GM12878 (cell line): ENCODE measurements at regions of chr15 and their contacts with region 1.

Region 1: GRCh38 chr15:77179541-77179998 is 108.7 kb upstream of the TSPAN3 start:
- DNase-seq: peak; percentile 74
- ATAC-seq: peak; percentile 74
- H3K4me3 ChIP-seq: no peak overlapping the region; the same call in 1 of the 2 replicates
- H3K27ac ChIP-seq: peak overlapping the region; percentile 90
- H3K4me1 ChIP-seq: peaks cover 47% of the 10 kb centered on the region
- H3K27me3 ChIP-seq: no peaks in the 10 kb centered on the region
- CTCF ChIP-seq: peak in 2 of 3 experiments; percentile 17 to 41; a peak in 2 of 6 replicates
- EP300 ChIP-seq: peak in 1 of 2 experiments; percentile 73; a peak in 1 of 4 replicates
- POLR2A ChIP-seq: no peak
- RAD21 ChIP-seq: peak; percentile 56

Region 2: DNA sequence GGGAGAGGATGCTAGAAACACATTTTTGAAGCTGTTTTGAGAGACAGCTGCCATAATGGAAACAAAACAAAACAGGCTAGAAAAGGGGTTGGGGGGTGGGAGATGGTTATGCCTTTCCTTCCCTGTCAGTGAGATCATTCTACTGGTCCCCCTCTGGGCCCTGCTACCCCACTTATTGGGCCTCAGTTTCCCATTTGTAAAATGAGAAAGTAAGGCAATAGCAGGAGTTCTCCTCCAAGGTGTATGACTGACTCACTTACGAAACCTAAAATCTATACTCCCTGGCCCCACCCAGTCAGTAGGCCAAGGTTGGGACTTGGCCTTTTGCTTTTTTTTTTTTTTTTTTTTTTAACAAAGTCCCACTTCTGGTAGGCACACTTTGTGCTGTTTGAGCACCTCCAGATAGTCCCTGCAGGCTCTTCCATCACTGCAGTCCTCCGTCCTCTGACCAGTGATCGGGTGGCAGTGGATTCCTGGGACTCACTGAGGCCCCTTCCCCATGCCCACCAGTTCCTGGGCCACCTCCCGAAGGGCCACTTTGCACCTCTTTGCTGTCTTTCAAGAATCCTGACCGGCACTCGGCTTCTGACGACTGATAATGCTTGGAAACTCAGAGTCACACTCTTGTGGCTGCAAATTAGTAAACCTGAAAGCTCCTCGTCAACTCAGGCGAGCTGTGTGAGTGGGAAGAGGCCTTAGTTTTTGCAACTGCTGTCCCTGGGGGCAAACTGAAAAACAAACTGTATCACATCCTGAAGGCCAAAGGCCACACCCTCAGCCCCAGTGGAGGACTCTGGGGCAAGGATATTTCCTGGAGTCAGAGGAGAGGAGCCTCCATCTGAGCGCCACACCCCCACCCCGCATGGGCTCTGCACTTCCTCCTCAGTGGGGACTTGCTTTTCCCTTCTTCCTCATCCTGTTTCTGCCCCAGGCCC is 191.4 kb before region 1 on chr15:
- CTCF ChIA-PET with region 1: interaction called, 4 read pairs
- POLR2A ChIA-PET with region 1: no interaction called
- RAD21 ChIA-PET with region 1: interaction called, 12 read pairs
- SMC1A ChIA-PET with region 1: interaction called, 3 read pairs
- in situ Hi-C with region 1: no loop called
- intact Hi-C with region 1: loop called (anchors 10 kb)
- DNase-seq: peak; percentile 90
- ATAC-seq: peak; percentile 91
- H3K4me3 ChIP-seq: peak overlapping the region; percentile 40; the same call in 1 of the 2 replicates
- H3K27ac ChIP-seq: peak overlapping the region; percentile 89
- H3K4me1 ChIP-seq: peaks cover 41% of the 10 kb centered on the region
- H3K27me3 ChIP-seq: no peaks in the 10 kb centered on the region
- CTCF ChIP-seq: no peak
- EP300 ChIP-seq: peak; percentile 79 to 94; a peak in 3 of 4 replicates
- POLR2A ChIP-seq: peak; percentile 53
- RAD21 ChIP-seq: peak; percentile 25; the same call in 1 of the 2 replicates

Region 3: GRCh38 chr15:77107531-77108355 is 71.8 kb before region 1 on chr15:
- CTCF ChIA-PET with region 1: interaction called, 28 read pairs
- POLR2A ChIA-PET with region 1: no interaction called
- RAD21 ChIA-PET with region 1: interaction called, 7 read pairs
- SMC1A ChIA-PET with region 1: interaction called, 12 read pairs
- in situ Hi-C with region 1: no loop called
- intact Hi-C with region 1: no loop called
- DNase-seq: no peak
- ATAC-seq: peak; percentile 82
- H3K4me3 ChIP-seq: no peak overlapping the region
- H3K27ac ChIP-seq: no peak overlapping the region
- H3K4me1 ChIP-seq: no peaks in the 10 kb centered on the region
- H3K27me3 ChIP-seq: no peaks in the 10 kb centered on the region
- CTCF ChIP-seq: peak; percentile 61 to 76 (median 69)
- EP300 ChIP-seq: no peak
- POLR2A ChIP-seq: no peak
- RAD21 ChIP-seq: peak; percentile 78

Region 4: DNA sequence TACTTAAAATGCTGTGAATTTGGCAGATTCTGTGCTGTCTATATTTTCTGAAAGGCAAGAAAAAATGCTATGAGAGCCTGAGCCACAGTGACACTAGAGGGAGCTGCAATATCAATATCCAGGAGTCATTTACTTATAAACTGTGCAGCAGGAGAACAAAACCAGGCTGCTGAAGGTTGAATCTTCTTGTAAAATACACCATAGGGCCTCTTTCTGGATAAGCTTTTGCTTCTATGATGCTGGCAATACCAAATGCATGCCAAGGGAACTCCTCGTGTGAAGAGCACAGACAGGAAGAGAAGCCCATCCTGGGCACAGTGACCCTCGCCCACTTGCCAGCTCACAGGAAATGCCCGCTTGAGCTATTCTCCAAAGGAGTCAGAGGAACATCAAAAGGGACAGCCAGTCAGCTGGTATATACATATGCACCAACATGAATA is 60.7 kb before region 1 on chr15:
- CTCF ChIA-PET with region 1: interaction called, 361 read pairs
- POLR2A ChIA-PET with region 1: interaction called, 7 read pairs
- RAD21 ChIA-PET with region 1: interaction called, 272 read pairs
- SMC1A ChIA-PET with region 1: interaction called, 365 read pairs
- in situ Hi-C with region 1: no loop called
- intact Hi-C with region 1: loop called (anchors 1 kb)
- DNase-seq: peak; percentile 32
- ATAC-seq: peak; percentile 81
- H3K4me3 ChIP-seq: no peak overlapping the region
- H3K27ac ChIP-seq: no peak overlapping the region
- H3K4me1 ChIP-seq: peaks cover 12% of the 10 kb centered on the region; the same call in 1 of the 2 replicates
- H3K27me3 ChIP-seq: no peaks in the 10 kb centered on the region
- CTCF ChIP-seq: peak; percentile 65 to 76 (median 71)
- EP300 ChIP-seq: no peak
- POLR2A ChIP-seq: no peak
- RAD21 ChIP-seq: peak; percentile 86

Region 5: DNA sequence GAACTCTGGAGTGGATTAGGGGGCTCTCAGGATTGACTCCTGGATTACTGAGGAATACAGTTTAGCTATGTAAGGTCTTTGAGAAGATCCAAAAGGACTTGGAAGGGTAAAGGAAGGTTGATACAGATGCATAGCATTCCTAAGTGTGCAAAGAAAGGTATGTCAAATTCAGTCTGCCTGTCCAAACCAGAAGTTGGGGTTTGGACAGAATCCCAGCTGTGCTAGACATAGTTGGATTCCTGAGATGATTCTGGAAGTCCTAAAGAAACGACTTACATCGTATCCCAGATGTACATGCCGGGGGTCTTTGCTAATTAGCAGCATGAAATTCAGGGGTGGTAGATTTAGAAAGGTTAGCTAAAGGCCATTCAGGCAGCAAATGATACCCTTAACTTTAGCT is 11.0 kb before region 1 on chr15:
- CTCF ChIA-PET with region 1: interaction called, 25 read pairs
- POLR2A ChIA-PET with region 1: interaction called, 4 read pairs
- RAD21 ChIA-PET with region 1: interaction called, 5 read pairs
- SMC1A ChIA-PET with region 1: interaction called, 25 read pairs
- in situ Hi-C with region 1: no loop called
- intact Hi-C with region 1: no loop called
- DNase-seq: no peak
- ATAC-seq: no peak
- H3K4me3 ChIP-seq: no peak overlapping the region
- H3K27ac ChIP-seq: no peak overlapping the region
- H3K4me1 ChIP-seq: no peaks in the 10 kb centered on the region
- H3K27me3 ChIP-seq: no peaks in the 10 kb centered on the region
- CTCF ChIP-seq: no peak
- EP300 ChIP-seq: no peak
- POLR2A ChIP-seq: no peak
- RAD21 ChIP-seq: no peak

Region 6: GRCh38 chr15:77419836-77420609 is 240.5 kb after region 1 on chr15 and contains the start of gene PEAK1:
- CTCF ChIA-PET with region 1: interaction called, 18 read pairs
- POLR2A ChIA-PET with region 1: interaction called, 3 read pairs
- RAD21 ChIA-PET with region 1: interaction called, 55 read pairs
- SMC1A ChIA-PET with region 1: interaction called, 107 read pairs
- in situ Hi-C with region 1: no loop called
- intact Hi-C with region 1: loop called (anchors 2 kb)
- DNase-seq: peak; percentile 86
- ATAC-seq: peak; percentile 93
- H3K4me3 ChIP-seq: peak within 1 kb of the TSS; percentile 84
- H3K27ac ChIP-seq: peak within 1 kb of the TSS; percentile 98
- H3K4me1 ChIP-seq: no peaks in the 10 kb centered on the region; the same call in 1 of the 2 replicates
- H3K27me3 ChIP-seq: no peaks in the 10 kb centered on the region
- CTCF ChIP-seq: no peak
- EP300 ChIP-seq: no peak
- POLR2A ChIP-seq: peak; percentile 91
- RAD21 ChIP-seq: no peak
- polyA plus RNA-seq, gene PEAK1: 0.62 to 1.1 TPM

Region 7: DNA sequence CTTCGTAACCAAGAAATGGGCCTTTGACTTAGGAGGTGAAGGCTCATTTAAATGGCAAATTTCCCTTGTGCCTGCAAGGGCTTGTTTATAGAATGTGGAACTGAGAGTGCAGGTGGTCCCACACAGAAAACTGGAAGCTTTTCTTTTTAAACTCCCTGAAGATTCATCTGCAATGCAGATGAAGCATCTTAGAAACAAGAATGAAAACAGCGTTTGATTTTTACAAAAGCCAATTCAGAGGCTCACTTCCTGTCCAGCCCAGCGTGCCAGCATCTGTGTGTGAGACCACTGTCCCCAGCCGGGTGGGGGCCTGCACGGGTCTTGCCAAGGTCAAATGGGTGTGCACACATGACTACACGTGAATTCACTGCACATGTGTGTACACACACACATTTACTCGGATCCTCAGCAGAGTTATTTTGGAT is 358.5 kb after region 1 on chr15:
- CTCF ChIA-PET with region 1: interaction called, 455 read pairs
- POLR2A ChIA-PET with region 1: interaction called, 3 read pairs
- RAD21 ChIA-PET with region 1: interaction called, 286 read pairs
- SMC1A ChIA-PET with region 1: interaction called, 352 read pairs
- in situ Hi-C with region 1: no loop called
- intact Hi-C with region 1: no loop called
- DNase-seq: peak; percentile 72
- ATAC-seq: peak; percentile 82
- H3K4me3 ChIP-seq: peak overlapping the region; percentile 28; the same call in 1 of the 2 replicates
- H3K27ac ChIP-seq: peak overlapping the region; percentile 91
- H3K4me1 ChIP-seq: peaks cover 40% of the 10 kb centered on the region
- H3K27me3 ChIP-seq: no peaks in the 10 kb centered on the region
- CTCF ChIP-seq: no peak
- EP300 ChIP-seq: peak; percentile 53 to 56; a peak in 2 of 4 replicates
- POLR2A ChIP-seq: no peak
- RAD21 ChIP-seq: no peak